ENCODE measurements at regions of chr3 and their contacts with region 1.

Region 1: GRCh38 chr3:133573054-133573628 is 345 bp upstream of the CDV3 start:
- DNase-seq: peak; percentile 100
- H3K4me3 Mint-ChIP-seq: peak overlapping the region; percentile 79
- H3K27ac Mint-ChIP-seq: peak overlapping the region; percentile 98
- H3K4me1 Mint-ChIP-seq: peaks cover 53% of the 10 kb centered on the region
- H3K27me3 Mint-ChIP-seq: no peaks in the 10 kb centered on the region

Region 2: GRCh38 chr3:132659365-132660051 is 913.6 kb before region 1 on chr3 and contains the start of gene ACAD11:
- CTCF ChIA-PET with region 1: no interaction called
- POLR2A ChIA-PET with region 1: no interaction called
- intact Hi-C with region 1: loop called (anchors 1 kb)
- DNase-seq: peak; percentile 58
- H3K4me3 Mint-ChIP-seq: peak within 1 kb of the TSS; percentile 93
- H3K27ac Mint-ChIP-seq: peak within 1 kb of the TSS; percentile 88
- H3K4me1 Mint-ChIP-seq: peaks cover 44% of the 10 kb centered on the region
- H3K27me3 Mint-ChIP-seq: no peaks in the 10 kb centered on the region
- total RNA-seq, gene ACAD11: 11.2 to 13.8 TPM

Region 3: GRCh38 chr3:133448478-133449122 is 124.5 kb before region 1 on chr3:
- CTCF ChIA-PET with region 1: interaction called, 14 read pairs
- POLR2A ChIA-PET with region 1: interaction called, 31 read pairs
- intact Hi-C with region 1: loop called (anchors 1 kb)
- DNase-seq: peak; percentile 86
- H3K4me3 Mint-ChIP-seq: no peak overlapping the region
- H3K27ac Mint-ChIP-seq: peak overlapping the region; percentile 76
- H3K4me1 Mint-ChIP-seq: peaks cover 39% of the 10 kb centered on the region
- H3K27me3 Mint-ChIP-seq: no peaks in the 10 kb centered on the region

Region 4: GRCh38 chr3:133506215-133506901 is 66.8 kb before region 1 on chr3:
- CTCF ChIA-PET with region 1: interaction called, 3 read pairs
- POLR2A ChIA-PET with region 1: interaction called, 3 read pairs
- intact Hi-C with region 1: loop called (anchors 1 kb)
- DNase-seq: peak; percentile 46
- H3K4me3 Mint-ChIP-seq: peak overlapping the region; percentile 67
- H3K27ac Mint-ChIP-seq: peak overlapping the region; percentile 77
- H3K4me1 Mint-ChIP-seq: peaks cover 15% of the 10 kb centered on the region
- H3K27me3 Mint-ChIP-seq: no peaks in the 10 kb centered on the region

Region 5: GRCh38 chr3:133805527-133806475 is 232.7 kb after region 1 on chr3 and contains the start of gene SRPRB:
- CTCF ChIA-PET with region 1: no interaction called
- POLR2A ChIA-PET with region 1: interaction called, 4 read pairs
- intact Hi-C with region 1: loop called (anchors 1 kb)
- DNase-seq: peak; percentile 98
- H3K4me3 Mint-ChIP-seq: peak within 1 kb of the TSS; percentile 98
- H3K27ac Mint-ChIP-seq: peak within 1 kb of the TSS; percentile 94
- H3K4me1 Mint-ChIP-seq: peaks cover 37% of the 10 kb centered on the region
- H3K27me3 Mint-ChIP-seq: peaks cover 5% of the 10 kb centered on the region
- total RNA-seq, gene SRPRB: 65.7 to 66.7 TPM

Region 6: GRCh38 chr3:134299185-134299887 is 726.2 kb after region 1 on chr3:
- CTCF ChIA-PET with region 1: no interaction called
- POLR2A ChIA-PET with region 1: no interaction called
- intact Hi-C with region 1: loop called (anchors 1 kb)
- DNase-seq: no peak
- H3K4me3 Mint-ChIP-seq: no peak overlapping the region
- H3K27ac Mint-ChIP-seq: no peak overlapping the region
- H3K4me1 Mint-ChIP-seq: no peaks in the 10 kb centered on the region
- H3K27me3 Mint-ChIP-seq: peaks cover 21% of the 10 kb centered on the region

Region 7: GRCh38 chr3:134803051-134803505 is 1229.9 kb after region 1 on chr3:
- CTCF ChIA-PET with region 1: no interaction called
- POLR2A ChIA-PET with region 1: no interaction called
- intact Hi-C with region 1: no loop called
- DNase-seq: peak; percentile 71
- H3K4me3 Mint-ChIP-seq: no peak overlapping the region
- H3K27ac Mint-ChIP-seq: peak overlapping the region; percentile 79
- H3K4me1 Mint-ChIP-seq: peaks cover 35% of the 10 kb centered on the region
- H3K27me3 Mint-ChIP-seq: peaks cover 11% of the 10 kb centered on the region

Measured in activated CD4-positive, alpha-beta memory T cell treated with anti-CD3 and anti-CD28 coated beads for 36 hours (primary cell).